ENCODE measurements at regions of chr12 and their contacts with region 1.

Region 1: DNA sequence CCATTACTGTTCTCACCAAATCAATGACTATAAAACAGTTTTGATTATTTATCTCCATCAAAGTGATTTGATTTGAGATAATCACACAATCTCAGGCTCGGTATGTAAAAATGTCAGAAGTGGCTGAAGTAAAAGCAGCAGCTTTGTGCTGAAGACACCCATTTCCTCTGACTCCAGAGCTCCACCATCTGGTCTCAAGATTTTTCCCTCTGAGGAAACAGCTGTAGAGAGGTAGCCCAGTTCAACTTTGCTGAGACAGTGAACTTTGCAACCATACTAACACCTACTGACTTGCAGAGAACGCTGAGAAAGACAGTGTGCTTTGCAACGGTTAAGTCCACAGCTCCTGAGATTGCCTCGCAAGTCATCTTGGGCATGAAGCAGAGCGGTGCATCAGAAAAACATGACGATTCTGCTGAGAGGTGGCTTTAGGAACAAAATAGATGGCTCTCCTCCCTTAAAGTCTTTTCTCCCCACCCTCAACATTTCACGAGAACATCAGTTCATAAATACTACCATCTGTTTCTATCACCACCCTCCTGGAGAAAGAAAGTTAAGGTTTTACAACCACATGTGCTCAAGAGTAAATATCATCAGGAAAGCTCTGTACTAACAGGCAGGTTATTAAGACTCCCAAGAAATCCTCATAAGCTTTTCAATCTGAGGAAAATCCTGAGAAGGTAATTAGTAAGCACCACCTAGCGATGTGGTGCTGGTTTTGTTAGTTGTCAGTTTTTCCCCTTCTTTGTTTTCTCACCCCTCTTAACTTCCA is 34.8 kb downstream of the HIGD1C start:
- DNase-seq: peak; percentile 54
- H3K4me3 ChIP-seq: no peak overlapping the region
- H3K27ac ChIP-seq: peak overlapping the region in 1 of 2 donors; percentile 54
- H3K4me1 ChIP-seq: no peaks in the 10 kb centered on the region
- H3K27me3 ChIP-seq: no peaks in the 10 kb centered on the region
- CTCF ChIP-seq: peak in 2 of 4 experiments; percentile 52 to 60
- POLR2A ChIP-seq: no peak

Region 2: GRCh38 chr12:50740307-50740706 is 246.8 kb before region 1 on chr12:
- intact Hi-C with region 1: no loop called
- DNase-seq: no peak
- H3K4me3 ChIP-seq: no peak overlapping the region
- H3K27ac ChIP-seq: no peak overlapping the region
- H3K4me1 ChIP-seq: no peaks in the 10 kb centered on the region
- H3K27me3 ChIP-seq: no peaks in the 10 kb centered on the region
- CTCF ChIP-seq: no peak
- POLR2A ChIP-seq: no peak

Region 3: DNA sequence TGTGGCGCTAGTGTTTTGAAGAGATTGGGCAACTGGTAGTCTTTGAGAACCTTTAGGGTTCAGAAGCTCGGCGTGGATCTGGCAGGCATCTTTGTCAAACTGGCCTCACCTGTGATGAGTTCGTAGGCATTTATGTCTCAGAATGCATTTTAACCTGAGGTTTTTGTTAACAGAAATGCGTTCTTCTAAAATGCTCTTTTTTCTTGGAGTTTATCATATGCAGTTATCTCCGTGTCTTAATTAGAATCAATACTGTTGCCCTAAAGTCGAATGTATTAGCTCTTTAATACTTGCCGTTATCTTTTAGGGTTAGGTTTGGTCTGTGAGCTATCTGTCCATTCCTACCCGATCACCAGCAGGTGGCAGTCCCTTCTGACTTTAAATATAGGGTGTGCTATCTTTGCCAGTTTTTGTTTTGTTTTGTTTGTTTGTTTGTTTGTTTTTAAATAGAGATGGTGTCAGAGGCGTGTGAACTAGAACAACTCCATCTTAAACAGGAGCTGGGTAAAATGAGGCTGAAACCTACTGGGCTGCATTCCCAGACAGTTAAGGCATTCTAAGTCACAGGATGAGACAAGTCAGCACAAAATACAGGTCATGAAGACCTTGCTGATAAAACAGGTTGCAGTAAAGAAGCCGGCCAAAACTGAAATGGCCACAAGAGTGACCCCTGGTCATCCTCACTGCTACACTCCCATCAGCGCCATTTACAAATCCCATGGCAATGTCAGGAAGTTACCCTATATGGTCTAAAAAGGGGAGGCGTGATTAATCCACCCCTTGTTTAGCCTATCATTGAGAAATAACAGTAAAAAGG is 221.8 kb before region 1 on chr12:
- intact Hi-C with region 1: loop called (anchors 5 kb)
- DNase-seq: no peak
- H3K4me3 ChIP-seq: peak overlapping the region; percentile 93 to 99
- H3K27ac ChIP-seq: peak overlapping the region; percentile 98 to 99
- H3K4me1 ChIP-seq: no peaks in the 10 kb centered on the region
- H3K27me3 ChIP-seq: no peaks in the 10 kb centered on the region
- CTCF ChIP-seq: peak in 3 of 4 experiments; percentile 43 to 74 (median 69)
- POLR2A ChIP-seq: no peak

Region 4: DNA sequence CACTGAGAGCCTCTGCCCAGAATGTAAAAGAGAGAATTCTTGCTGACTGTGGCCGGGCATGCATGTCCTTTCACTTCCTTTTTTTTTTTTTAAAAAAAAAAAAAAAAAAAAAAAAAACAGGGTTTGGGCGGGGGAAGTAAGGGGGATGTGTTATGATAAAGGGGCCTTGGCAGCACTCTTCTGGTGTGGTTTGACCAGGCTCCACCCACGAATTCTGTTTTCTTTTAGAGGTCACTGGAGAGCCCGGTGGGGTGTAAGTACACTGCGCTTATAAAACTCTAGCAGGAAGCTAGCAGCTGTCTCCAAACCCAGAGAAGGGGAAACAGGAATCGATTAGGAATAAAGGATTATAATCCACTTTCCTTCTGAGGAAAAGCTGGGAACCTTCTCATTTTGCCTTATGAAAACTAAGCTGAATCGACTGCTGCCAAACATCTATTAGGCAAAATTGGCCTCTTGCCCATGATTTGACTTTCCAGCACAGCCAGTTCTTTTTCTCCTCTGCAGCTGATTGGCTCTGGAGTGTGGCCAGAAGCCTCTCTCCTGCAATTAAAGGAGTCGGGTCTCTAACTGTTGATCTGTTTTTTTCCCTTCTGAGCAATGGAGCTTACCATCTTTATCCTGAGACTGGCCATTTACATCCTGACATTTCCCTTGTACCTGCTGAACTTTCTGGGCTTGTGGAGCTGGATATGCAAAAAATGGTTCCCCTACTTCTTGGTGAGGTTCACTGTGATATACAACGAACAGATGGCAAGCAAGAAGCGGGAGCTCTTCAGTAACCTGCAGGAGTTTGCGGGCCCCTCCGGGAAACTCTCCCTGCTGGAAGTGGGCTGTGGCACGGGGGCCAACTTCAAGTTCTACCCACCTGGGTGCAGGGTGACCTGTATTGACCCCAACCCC is 62.5 kb before region 1 on chr12:
- intact Hi-C with region 1: loop called (anchors 5 kb)
- DNase-seq: peak; percentile 96
- H3K4me3 ChIP-seq: peak overlapping the region; percentile 66 to 68
- H3K27ac ChIP-seq: peak overlapping the region; percentile 82 to 83
- H3K4me1 ChIP-seq: peaks cover 5% of the 10 kb centered on the region
- H3K27me3 ChIP-seq: no peaks in the 10 kb centered on the region
- CTCF ChIP-seq: no peak
- POLR2A ChIP-seq: peak; percentile 36

Region 5: DNA sequence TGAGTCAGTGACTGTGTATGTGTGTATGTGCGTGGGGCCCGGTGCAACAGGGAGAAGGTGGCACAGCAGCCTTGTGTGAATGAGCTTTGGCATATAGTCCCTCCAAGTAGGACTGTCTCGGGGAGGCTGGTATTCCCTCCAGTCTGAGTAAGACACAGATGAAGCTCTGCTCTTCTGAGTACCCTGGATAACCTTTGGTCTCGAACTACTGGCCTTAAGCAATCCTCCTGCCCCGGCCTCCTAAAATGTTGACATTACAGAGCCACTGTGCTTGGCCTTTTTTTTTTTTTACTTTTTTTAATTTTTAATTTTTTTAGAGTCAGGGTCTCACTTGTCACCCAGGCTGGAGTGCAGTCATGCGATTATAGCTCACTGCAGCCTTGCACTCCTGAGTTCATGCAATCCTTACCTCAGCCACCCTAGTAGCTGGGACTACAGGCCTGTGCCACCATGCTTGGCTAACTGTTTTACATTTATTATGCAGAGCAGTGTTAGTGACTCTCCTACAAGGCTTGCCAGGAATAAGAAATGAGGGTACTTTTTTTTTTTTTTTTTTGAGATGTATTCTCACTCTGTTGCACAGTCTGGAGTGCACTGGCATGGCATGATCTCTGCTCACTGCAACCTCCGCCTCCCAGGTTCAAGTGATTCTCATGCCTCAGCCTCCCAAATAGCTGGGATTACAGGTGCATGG is 242.1 kb after region 1 on chr12:
- intact Hi-C with region 1: no loop called
- DNase-seq: no peak
- H3K4me3 ChIP-seq: no peak overlapping the region
- H3K27ac ChIP-seq: no peak overlapping the region
- H3K4me1 ChIP-seq: no peaks in the 10 kb centered on the region
- H3K27me3 ChIP-seq: no peaks in the 10 kb centered on the region
- CTCF ChIP-seq: no peak
- POLR2A ChIP-seq: no peak

Measured in prostate gland (tissue), 2 donors.